ENCODE measurements at regions of chr19 and their contacts with region 1.

Region 1: DNA sequence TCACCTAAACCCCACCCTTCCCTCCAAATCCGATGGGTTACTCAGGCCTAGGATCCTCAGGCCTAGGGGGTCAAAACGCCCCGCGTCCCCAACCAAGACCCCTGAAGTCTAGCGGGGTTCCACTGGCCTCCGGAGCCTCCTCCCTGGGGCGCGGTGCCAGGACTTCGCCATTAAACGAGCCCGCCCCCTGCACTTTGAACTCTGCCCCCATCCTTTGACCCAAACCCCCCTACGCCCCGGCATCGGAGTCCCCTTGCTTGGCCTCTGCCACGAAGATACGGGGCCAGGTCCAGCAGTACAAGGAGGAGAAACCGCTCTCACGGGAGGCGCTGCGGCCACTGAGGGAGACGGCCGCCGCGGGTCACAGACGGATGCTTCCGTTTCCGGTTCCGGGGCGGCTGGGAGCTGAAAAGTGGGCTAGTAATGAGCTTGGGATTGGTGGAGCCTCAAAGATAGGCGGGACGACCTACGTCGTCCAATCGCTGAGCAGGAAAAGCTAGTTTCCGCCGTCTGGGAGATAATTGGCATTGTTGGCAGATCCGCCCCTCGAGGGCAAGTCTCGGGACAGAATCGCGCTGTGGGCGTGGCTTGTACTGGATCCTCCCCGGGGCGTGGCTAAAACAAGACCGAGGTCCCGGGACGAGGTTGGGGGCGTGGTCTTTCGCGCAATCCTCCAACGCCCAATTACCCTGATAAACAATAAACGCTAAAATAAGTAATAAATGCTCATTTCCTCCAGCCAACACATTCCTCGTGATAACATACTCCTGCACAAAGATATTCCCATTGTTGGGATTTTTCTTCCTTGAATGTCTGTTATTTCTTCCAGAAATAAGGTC is 5.7 kb upstream of the ZNF77 start:
- DNase-seq: peak; percentile 100
- H3K4me3 Mint-ChIP-seq: peak overlapping the region; percentile 96
- H3K27ac Mint-ChIP-seq: peak overlapping the region; percentile 99
- H3K4me1 Mint-ChIP-seq: peaks cover 16% of the 10 kb centered on the region
- H3K27me3 Mint-ChIP-seq: no peaks in the 10 kb centered on the region
- CTCF ChIP-seq: no peak

Region 2: GRCh38 chr19:2900296-2901252 is 49.9 kb before region 1 on chr19 and contains the start of gene ZNF57:
- CTCF ChIA-PET with region 1: interaction called, 7 read pairs
- POLR2A ChIA-PET with region 1: interaction called, 37 read pairs
- intact Hi-C with region 1: no loop called
- DNase-seq: peak; percentile 100
- H3K4me3 Mint-ChIP-seq: peak within 1 kb of the TSS; percentile 94
- H3K27ac Mint-ChIP-seq: peak within 1 kb of the TSS; percentile 94
- H3K4me1 Mint-ChIP-seq: peaks cover 19% of the 10 kb centered on the region
- H3K27me3 Mint-ChIP-seq: no peaks in the 10 kb centered on the region
- CTCF ChIP-seq: no peak
- total RNA-seq, gene ZNF57: 4.8 and 5.5 TPM in 2 replicates

Region 3: DNA sequence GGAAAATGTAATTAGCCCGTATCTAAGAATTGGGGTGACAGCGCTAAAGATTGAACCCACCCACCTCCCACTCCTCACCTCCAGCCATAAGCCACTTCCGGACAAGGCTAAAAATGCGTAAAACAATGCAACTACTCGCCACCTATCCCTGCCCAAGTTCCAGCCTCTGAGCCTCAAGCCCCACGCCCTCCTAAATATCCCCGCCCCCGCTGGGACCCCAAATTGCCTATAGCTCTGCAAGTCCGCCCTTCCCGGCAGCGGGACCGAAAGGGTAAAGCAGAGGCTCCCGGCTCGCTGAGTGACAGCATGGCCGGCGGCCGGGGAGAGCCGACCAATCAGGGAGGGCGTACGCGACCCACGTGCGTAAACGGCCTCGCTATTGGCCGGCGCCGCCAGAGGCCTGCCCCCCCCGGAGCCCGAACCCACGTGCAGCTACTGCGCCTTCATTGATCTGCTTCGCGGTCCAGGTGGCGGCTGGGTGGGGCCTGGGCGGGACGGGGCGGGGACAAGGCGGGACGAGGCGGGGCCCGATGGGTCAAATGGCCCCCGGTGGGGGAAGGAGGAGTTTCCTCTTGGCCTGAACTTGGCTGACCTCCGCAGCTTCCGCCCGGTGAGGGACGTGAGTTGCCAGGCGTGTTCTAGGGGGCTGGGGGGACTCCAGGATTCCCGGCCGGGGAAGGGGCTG is 26.6 kb after region 1 on chr19 and contains the start of gene TLE6:
- CTCF ChIA-PET with region 1: interaction called, 4 read pairs
- POLR2A ChIA-PET with region 1: interaction called, 14 read pairs
- intact Hi-C with region 1: no loop called
- DNase-seq: peak; percentile 96
- H3K4me3 Mint-ChIP-seq: peak within 1 kb of the TSS; percentile 78
- H3K27ac Mint-ChIP-seq: no peak within 1 kb of the TSS
- H3K4me1 Mint-ChIP-seq: peaks cover 23% of the 10 kb centered on the region
- H3K27me3 Mint-ChIP-seq: no peaks in the 10 kb centered on the region
- CTCF ChIP-seq: no peak
- total RNA-seq, gene TLE6: 0.89 and 2.9 TPM in 2 replicates

Region 4: DNA sequence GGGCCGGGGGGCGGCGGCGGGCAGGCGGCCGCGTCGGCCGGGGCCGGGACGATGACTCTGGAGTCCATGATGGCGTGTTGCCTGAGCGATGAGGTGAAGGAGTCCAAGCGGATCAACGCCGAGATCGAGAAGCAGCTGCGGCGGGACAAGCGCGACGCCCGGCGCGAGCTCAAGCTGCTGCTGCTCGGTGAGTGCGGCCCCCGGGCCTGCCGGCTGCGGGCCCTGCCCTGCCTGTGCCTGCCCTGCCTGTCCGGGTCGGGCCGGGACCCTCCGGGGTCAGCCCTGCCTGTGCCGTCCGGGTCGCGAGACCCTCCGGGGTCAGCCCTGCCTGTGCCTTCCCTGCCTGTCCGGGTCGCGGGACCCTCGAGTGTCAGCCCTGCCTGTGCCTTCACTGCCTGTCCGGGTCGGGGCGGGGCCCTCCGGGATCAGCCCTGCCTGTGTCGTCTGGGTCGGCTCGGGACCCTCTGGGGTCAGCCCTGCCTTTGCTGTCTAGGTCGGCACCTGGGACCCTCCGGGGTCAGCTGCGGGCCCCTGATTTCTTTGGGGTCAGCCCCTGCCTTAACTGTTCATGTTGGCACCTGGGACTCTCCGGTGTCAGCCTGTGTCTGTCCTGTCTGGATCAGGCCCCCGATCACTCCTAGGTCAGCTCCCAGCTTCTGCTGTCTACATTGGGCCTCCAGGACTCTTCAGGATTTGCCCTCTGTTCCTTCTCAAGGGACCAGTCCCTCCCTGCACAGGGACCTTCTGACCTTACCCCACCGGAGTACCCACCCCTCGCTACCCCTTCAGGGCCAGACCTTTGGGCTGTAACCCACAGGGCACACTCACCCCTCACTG is 144.3 kb after region 1 on chr19:
- CTCF ChIA-PET with region 1: interaction called, 5 read pairs
- POLR2A ChIA-PET with region 1: interaction called, 16 read pairs
- intact Hi-C with region 1: no loop called
- DNase-seq: peak; percentile 25
- H3K4me3 Mint-ChIP-seq: peak overlapping the region; percentile 93
- H3K27ac Mint-ChIP-seq: peak overlapping the region; percentile 88
- H3K4me1 Mint-ChIP-seq: peaks cover 24% of the 10 kb centered on the region
- H3K27me3 Mint-ChIP-seq: no peaks in the 10 kb centered on the region
- CTCF ChIP-seq: no peak

Region 5: GRCh38 chr19:3132971-3133792 is 182.7 kb after region 1 on chr19:
- CTCF ChIA-PET with region 1: interaction called, 31 read pairs
- POLR2A ChIA-PET with region 1: interaction called, 12 read pairs
- intact Hi-C with region 1: no loop called
- DNase-seq: no peak
- H3K4me3 Mint-ChIP-seq: no peak overlapping the region
- H3K27ac Mint-ChIP-seq: no peak overlapping the region
- H3K4me1 Mint-ChIP-seq: no peaks in the 10 kb centered on the region
- H3K27me3 Mint-ChIP-seq: no peaks in the 10 kb centered on the region
- CTCF ChIP-seq: no peak

Measured in MCF 10A (cell line).